ENCODE measurements at regions of chr16 and their contacts with region 1.

Region 1: DNA sequence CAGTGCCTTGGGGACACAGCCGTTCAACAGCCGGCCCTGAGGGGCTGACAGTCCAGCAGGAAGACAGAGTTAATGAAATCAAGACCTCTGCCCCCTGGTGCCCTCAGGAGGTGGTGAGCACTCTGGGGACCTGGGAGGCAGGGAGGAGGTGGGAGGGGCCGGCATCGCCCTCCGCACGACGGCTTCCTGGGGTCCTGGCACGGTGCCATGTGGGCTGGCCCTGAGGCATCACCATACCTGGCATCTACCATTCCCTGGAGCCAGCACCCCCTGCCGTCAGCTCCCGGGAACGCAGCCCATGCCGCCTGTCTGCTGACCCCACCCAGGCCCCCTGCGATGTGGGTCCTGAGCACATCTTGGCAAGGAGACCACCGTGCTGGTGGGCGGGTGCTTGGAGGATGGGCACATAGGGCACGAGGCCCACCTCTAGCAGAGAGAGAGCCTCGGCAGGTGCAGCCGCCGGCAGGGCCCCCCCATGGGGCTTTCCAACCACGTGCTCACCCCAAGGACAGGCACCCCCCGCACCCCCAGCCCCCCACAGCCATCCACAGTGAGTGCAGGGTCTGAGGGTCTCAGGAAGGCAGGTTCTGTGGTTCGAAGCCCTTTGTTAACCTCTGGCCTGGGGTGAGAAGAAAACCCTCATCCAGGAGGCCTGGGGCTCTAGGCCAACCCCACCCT is 52.5 kb downstream of the ZFPM1 start:
- DNase-seq: peak in 1 of 2 donors; percentile 54
- ATAC-seq: peak in 4 of 8 donors; percentile 2 to 24 (median 10)
- H3K4me3 ChIP-seq: no peak overlapping the region
- H3K27ac ChIP-seq: no peak overlapping the region
- H3K4me1 ChIP-seq: peaks cover 0 to 2% (median 1%) of the 10 kb centered on the region in 9 donors
- H3K27me3 ChIP-seq: no peaks in the 10 kb centered on the region
- CTCF ChIP-seq: peak in 8 of 9 donors; percentile 15 to 53 (median 34)

Region 2: DNA sequence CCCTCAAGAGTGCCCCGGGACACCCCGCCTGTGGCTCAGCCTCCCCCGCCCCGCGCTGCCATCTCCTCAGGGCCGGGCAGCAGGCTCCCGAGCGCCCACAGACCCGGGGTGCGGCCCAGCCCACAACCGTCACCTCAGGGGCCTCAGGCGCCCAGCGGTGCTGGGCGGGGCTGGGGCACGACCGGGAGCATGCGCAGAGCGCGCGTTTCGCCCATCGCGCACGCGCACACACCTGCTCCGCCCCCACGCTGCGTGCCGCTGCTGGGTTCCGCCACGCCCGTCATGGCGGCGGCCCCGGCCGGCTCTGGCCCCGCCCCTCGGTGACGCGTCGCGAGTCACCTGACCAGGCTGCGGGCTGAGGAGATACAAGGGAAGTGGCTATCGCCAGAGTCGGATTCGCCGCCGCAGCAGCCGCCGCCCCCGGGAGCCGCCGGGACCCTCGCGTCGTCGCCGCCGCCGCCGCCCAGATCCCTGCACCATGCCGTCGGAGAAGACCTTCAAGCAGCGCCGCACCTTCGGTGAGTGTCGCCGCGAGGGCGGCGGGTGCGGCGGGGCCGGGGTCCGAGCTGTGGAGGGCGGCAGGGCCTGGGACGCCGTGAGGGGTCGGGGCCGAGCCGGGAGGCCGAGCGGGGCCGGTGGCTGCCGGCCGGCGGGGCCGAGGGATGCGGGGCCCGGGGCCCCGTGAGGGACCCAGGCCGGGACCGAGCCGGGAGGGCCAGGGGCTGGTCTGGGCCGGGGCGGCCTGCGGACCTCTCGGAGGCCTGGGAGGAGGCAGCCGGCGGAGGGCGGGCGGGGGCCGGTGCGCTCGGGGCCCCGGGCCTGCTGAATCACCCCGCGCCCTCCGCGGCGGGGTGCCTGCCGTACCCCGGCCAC is 1113.4 kb before region 1 on chr16 and contains the start of gene MAP1LC3B:
- intact Hi-C with region 1: no loop called
- DNase-seq: peak; percentile 94 to 98
- ATAC-seq: peak; percentile 89 to 96 (median 93)
- H3K4me3 ChIP-seq: peak within 1 kb of the TSS; percentile 55 to 85 (median 74)
- H3K27ac ChIP-seq: peak within 1 kb of the TSS; percentile 97 to 100 (median 99)
- H3K4me1 ChIP-seq: peaks cover 17 to 68% (median 52%) of the 10 kb centered on the region in 9 donors
- H3K27me3 ChIP-seq: no peaks in the 10 kb centered on the region
- CTCF ChIP-seq: no peak
- total RNA-seq, gene MAP1LC3B: 109 to 141 (median 125) TPM

Region 3: DNA sequence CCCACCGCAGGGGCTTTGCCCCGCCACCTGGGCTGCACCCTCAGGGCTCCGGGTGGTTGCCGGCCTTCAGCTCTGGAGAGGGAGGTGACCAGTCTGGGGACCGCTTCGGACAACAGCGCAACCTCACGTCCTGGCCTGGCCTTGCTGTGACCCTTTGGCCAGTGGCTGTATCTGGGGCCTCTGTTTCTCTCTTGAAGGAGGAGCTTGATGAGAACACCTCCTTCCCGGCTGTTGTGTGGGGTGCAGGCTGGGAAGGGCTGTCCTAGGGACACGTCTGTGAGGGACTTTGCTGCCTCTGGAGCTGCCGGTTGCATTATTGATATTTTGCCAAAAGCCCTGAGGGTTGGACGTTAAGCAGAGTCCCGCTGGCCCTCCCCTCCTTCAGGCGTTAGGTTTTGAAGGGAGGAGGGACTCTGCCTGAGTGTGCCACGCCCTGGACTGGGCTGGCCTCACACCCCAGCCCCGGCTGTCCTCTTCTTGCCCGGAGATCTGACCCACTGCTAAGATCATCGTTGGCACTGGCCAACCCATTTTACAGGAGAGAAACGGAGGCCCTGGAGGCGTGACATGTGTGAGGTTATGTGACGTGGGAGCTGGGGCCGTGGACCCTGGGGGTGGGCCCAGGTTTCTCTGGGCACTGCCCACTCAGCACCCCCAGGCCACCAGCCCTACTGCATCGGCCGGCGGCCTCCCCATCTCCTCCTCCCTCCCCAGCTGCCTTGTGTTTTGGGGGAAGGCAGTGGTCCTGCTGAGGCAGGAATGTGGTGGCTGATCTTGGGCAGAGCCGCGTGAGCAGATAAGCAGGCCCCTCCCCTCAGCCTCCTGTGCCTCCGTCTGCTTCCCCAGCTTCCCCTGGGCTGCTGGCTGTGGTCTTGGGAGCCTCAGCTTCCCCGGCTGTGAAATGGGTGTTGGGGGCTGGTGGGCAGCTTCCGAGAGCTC is 43.9 kb before region 1 on chr16:
- intact Hi-C with region 1: loop called in 1 of 10 experiments (anchors 5 kb)
- DNase-seq: no peak
- ATAC-seq: peak in 6 of 8 donors; percentile 19 to 60 (median 45)
- H3K4me3 ChIP-seq: no peak overlapping the region
- H3K27ac ChIP-seq: peak overlapping the region in 1 of 10 donors; percentile 34
- H3K4me1 ChIP-seq: peaks cover 0 to 36% (median 12%) of the 10 kb centered on the region in 9 donors
- H3K27me3 ChIP-seq: peaks cover 0 to 6% (median 0%) of the 10 kb centered on the region in 7 donors
- CTCF ChIP-seq: no peak

Region 4: GRCh38 chr16:88886845-88887521 is 381.4 kb after region 1 on chr16:
- intact Hi-C with region 1: no loop called
- DNase-seq: peak; percentile 90 to 94
- ATAC-seq: peak; percentile 82 to 94 (median 88)
- H3K4me3 ChIP-seq: peak overlapping the region in 2 of 10 donors; percentile 12 to 22
- H3K27ac ChIP-seq: peak overlapping the region; percentile 63 to 90 (median 82)
- H3K4me1 ChIP-seq: peaks cover 19 to 40% (median 27%) of the 10 kb centered on the region in 9 donors
- H3K27me3 ChIP-seq: peaks cover 0 to under 1% (median 0%) of the 10 kb centered on the region in 7 donors
- CTCF ChIP-seq: peak in 6 of 9 donors; percentile 14 to 62 (median 40)